Activated CD8-positive, alpha-beta T cell treated with anti-CD3 and anti-CD28 coated beads, Interleukin-2, amount 10 ng/mL, durations not matched to agents 7 days and 5 days (primary cell): ENCODE measurements at regions of chr11 and their contacts with region 1.

Region 1: GRCh38 chr11:66311965-66312548 is 4.8 kb downstream of the CD248 start:
- DNase-seq: peak; percentile 98
- ATAC-seq: peak; percentile 74
- H3K4me3 Mint-ChIP-seq: peak overlapping the region; percentile 87
- H3K27ac Mint-ChIP-seq: peak overlapping the region; percentile 99
- H3K4me1 Mint-ChIP-seq: peaks cover 29% of the 10 kb centered on the region
- H3K27me3 Mint-ChIP-seq: no peaks in the 10 kb centered on the region

Region 2: DNA sequence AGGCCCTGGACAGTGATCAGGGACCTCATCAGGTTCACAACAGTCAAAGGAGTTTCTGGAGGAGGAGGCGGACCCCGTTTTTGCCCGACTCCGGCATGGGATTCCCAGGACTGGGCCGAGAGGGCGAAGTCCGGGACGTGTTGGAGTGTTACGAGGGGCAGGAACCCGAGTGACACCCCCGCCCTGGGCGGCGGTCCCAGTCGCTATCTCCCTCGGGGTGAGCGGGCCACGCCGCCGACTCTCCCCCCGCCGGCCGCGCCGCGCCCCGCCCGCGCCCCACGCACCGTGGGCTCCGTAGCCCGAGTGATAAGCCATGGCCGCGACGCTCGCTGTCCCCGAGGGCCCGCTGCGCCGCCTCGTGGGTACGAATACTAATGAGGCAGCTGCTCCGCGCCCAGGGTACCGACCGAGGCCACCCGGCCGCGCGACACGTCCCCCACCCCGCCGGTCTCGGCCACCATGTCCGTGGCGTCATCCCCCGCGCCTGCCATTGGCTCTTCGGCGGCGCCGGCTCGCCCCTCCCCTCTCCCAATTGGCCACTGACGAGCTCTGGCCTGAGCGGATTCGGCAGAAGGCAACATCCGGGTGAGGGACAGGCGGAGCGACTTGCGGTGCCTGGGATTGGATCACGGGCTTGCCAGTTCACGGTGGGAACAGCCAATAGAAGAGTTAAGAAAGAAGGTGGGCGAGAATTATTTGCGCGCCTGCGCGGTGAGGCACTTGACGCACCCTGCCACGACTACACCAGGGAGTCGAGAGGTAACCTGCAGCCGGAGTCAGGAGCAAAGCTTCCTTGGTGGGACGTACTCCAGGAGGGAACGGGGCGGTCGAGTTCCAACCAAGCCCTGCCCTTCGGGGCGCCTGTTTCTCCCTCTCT is 23.1 kb before region 1 on chr11 and contains the start of gene YIF1A:
- CTCF ChIA-PET with region 1: interaction called, 21 read pairs
- POLR2A ChIA-PET with region 1: interaction called, 7 read pairs
- DNase-seq: peak; percentile 99
- ATAC-seq: peak; percentile 95
- H3K4me3 Mint-ChIP-seq: peak within 1 kb of the TSS; percentile 85
- H3K27ac Mint-ChIP-seq: peak within 1 kb of the TSS; percentile 91
- H3K4me1 Mint-ChIP-seq: peaks cover 42% of the 10 kb centered on the region
- H3K27me3 Mint-ChIP-seq: peaks cover 26% of the 10 kb centered on the region
- total RNA-seq, gene YIF1A: 46.6 to 58.6 TPM

Region 3: GRCh38 chr11:66328307-66329144 is 16.5 kb after region 1 on chr11:
- CTCF ChIA-PET with region 1: interaction called, 194 read pairs
- POLR2A ChIA-PET with region 1: interaction called, 45 read pairs
- DNase-seq: peak; percentile 85
- ATAC-seq: peak; percentile 78
- H3K4me3 Mint-ChIP-seq: peak overlapping the region; percentile 4
- H3K27ac Mint-ChIP-seq: peak overlapping the region; percentile 85
- H3K4me1 Mint-ChIP-seq: peaks cover 55% of the 10 kb centered on the region
- H3K27me3 Mint-ChIP-seq: no peaks in the 10 kb centered on the region

Region 4: GRCh38 chr11:66344550-66345315 is 32.7 kb after region 1 on chr11 and contains the start of gene BRMS1:
- CTCF ChIA-PET with region 1: interaction called, 79 read pairs
- POLR2A ChIA-PET with region 1: interaction called, 28 read pairs
- DNase-seq: peak; percentile 98
- ATAC-seq: peak; percentile 77
- H3K4me3 Mint-ChIP-seq: peak within 1 kb of the TSS; percentile 96
- H3K27ac Mint-ChIP-seq: peak within 1 kb of the TSS; percentile 93
- H3K4me1 Mint-ChIP-seq: peaks cover 55% of the 10 kb centered on the region
- H3K27me3 Mint-ChIP-seq: peaks cover 2% of the 10 kb centered on the region
- total RNA-seq, gene BRMS1: 53.2 to 57.1 TPM

Region 5: GRCh38 chr11:66371627-66372415 is 59.8 kb after region 1 on chr11 and contains the start of gene SLC29A2:
- CTCF ChIA-PET with region 1: interaction called, 37 read pairs
- POLR2A ChIA-PET with region 1: interaction called, 10 read pairs
- DNase-seq: peak; percentile 91
- ATAC-seq: peak; percentile 87
- H3K4me3 Mint-ChIP-seq: peak within 1 kb of the TSS; percentile 86
- H3K27ac Mint-ChIP-seq: peak within 1 kb of the TSS; percentile 92
- H3K4me1 Mint-ChIP-seq: peaks cover 27% of the 10 kb centered on the region
- H3K27me3 Mint-ChIP-seq: peaks cover 3% of the 10 kb centered on the region
- total RNA-seq, gene SLC29A2: 10.0 to 11.1 TPM